Lower leg skin (tissue), 4 donors: ENCODE measurements at regions of chr4 and their contacts with region 1.

Region 1: GRCh38 chr4:8580321-8581093 is at the start of gene GPR78:
- DNase-seq: no peak
- H3K4me3 ChIP-seq: no peak within 1 kb of the TSS
- CTCF ChIP-seq: no peak
- POLR2A ChIP-seq: no peak
- total RNA-seq, gene GPR78: not detected

Region 2: DNA sequence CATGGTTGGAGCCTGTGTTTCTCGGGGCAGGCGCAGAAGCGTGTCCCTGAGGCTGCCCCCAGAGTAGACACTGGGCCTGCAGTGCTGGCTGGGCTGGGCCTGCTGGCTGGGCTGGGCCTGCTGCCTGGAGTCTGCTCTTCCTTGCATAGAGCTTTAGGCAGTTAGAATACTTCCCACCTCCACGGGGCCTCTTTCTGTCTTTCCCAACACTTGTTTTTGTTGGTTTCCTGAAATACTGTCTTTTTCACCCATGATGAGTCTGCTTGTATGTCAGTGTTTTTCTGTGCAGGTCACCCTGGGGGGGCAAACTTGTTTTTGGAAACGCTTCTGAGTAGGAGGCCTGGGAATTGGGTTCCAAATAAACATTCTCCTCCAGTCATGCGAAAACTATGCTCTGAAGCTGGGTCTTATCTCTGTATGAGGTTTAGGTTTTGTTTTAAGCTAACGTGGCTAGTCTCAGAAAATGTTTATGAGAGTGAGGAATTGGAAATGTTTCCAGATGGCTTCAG is 107.8 kb before region 1 on chr4:
- intact Hi-C with region 1: loop called (anchors 10 kb)
- DNase-seq: no peak
- H3K4me3 ChIP-seq: no peak overlapping the region
- CTCF ChIP-seq: no peak
- POLR2A ChIP-seq: no peak

Region 3: DNA sequence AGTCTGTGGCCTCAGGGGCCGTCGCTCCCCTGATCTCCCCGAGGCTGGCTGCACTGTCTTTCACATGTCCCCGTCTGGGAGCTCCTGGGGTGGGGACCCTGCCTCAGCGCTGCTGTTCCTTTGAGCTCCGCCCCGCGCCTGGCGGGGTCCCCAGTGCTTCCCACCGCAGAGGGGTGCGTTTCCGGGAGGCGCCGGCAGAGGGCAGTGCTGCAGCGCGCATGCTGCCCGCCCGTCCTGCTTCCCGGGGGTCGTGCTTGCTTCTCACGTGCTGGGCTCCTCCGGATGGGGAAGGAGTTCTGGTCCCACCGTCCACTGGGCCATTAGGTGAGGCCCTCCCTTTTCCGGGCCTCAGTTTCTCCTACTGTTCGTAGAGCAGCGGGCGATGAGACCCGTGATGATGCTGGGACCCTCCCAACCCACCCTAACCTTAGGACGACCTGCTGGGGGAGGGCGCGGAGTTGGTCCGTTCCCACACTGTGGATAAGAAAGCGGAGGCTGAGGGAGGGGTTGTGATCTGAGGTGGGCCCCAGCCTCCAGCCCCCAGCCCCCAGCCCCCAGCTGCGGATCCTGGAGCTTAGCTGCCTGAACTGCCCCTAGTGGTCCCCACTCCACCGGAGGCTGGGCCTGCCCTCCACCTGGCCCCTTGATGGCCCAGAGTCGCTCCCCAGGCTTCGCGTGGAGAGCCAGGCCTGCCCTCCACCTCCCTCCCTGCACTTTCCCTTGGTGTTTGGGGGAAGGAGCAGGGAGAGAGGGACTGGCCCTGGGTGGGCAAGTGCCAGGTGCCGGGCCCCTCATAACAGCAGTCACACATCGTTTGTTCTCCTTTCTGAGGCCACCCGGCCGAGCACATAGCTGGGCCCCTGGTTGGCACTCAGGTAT is 27.3 kb after region 1 on chr4:
- intact Hi-C with region 1: no loop called
- DNase-seq: no peak
- H3K4me3 ChIP-seq: no peak overlapping the region
- CTCF ChIP-seq: peak in 1 of 3 donors; percentile 16
- POLR2A ChIP-seq: no peak

Region 4: DNA sequence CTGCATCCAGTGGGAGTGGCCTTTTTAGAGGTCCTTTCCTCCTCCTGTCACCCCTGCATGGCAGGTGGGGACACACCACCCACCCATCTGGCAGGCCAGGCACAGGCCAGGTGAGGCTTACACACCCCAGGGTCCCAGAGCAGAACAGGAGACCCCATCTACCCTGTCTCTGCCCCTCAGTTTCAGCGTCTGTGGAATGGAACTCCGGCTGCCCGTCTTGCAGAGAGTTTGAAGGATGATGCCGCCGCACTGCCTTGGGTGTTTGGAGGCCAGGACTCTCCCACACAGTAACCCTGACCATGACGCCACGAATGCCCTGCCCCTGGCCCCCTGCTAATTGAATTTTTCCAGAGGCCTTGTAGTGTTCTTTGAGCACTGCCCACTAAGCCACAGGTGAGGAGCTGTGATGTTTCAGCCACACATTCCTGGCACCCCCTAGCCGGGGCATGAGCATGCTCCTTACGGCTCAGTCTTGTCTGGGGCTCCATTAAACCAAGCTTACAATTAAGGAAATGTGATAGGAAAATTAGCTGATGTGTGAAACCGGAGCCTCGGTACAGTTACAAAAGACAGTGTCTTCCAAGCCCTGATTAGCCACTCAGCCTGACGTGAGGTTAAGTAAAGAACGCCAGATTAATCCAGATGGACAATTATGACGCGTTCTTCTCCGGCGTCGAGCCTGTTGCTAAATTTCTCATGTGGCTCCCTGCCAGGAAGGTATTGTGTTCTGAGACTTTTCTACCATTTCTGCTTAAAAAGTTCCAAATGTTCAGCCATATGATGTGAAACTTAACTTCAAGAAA is 251.8 kb after region 1 on chr4:
- intact Hi-C with region 1: no loop called
- DNase-seq: peak in 1 of 2 donors; percentile 73
- H3K4me3 ChIP-seq: no peak overlapping the region
- CTCF ChIP-seq: no peak
- POLR2A ChIP-seq: no peak